Cardiac septum (tissue), 1 donor: ENCODE measurements at regions of chr6 and their contacts with region 1.

Region 1: DNA sequence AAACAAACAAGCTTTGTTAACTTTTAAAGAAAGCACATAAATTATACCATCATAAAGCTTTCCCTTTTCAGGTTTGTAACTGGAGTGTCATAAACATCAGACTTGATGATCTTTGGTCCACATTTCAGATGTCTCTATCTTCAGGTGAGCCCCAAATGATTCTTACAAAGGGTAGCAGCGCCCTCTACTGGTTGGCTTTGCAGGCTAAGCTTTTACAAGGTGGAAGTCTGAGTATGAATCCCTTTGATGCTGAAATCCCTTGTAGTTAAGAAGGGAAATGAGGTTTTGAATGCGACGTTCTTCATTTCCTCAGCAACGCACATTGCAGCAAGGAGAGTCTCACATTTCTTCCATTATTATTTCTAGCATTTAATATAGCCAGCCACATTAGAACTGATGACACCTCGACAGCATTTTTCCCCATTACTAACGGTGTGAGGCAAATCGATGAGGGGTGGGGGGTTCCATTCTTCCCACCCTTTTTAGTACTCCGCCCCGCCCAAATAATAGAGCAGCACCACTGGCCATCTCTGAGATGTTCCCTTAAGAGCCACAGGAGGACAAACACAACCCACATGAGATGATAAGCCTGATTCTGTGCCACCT is 126.3 kb upstream of the NT5E start:
- DNase-seq: no peak

Region 2: DNA sequence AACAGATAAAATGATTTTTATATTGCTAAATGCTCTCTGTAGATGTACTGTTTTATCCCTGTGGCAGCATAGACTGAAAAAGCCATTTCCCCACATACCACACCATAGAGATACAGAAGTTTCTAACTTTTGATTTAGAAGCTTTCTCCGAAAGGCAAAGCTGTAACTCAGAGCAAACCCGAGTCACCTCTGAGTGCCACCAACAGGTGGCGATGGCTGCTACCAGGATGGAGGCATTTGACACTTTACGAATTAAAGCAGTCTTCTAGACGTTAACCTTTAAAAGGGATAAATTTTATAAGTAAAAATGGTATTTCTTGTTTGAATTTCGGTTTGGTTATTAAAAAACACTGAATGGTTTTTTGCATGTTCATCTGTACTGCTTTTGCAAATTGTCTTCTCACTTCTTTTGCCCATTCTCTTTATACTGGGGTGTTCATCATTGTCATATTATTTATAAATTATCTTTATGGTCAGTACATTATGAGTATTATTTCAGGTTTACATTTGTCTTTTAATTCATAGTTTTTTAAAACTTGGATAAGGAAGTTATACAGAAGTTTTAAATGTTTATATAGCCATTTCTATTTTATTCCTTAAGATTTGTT is 895.1 kb before region 1 on chr6:
- intact Hi-C with region 1: loop called (anchors 10 kb)
- DNase-seq: no peak

Region 3: DNA sequence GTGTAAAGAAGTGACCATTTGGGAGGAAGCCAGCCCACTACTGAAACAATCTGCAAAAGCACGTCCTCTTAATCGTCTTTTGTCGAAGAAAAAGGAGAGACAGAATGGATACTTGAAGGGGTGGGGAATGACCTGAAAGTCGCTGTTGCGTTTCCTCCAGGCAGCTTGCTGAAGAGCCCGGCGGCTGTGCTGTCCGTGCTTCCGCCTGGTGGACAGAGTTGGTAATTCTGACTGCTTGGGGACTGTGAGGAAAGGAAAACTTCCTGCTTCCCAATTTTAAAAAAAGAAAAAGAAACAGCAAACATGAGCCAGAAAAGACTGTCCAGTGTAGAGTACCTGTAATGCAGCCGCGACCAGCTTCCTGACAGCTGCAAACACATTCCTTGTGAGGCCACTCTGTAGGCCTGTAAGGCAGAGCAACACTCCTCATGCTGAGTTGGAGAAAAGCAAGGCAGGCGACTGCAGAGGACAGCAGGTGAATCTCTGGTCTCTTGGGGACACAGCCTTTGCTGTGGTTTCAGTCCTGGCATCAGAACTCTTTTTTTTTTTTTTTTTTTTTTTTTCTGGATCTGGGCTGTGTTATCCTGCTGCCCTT is 308.0 kb before region 1 on chr6:
- intact Hi-C with region 1: loop called (anchors 10 kb)
- DNase-seq: no peak